IMR-90 (cell line): ENCODE measurements at regions of chr14 and their contacts with region 1.

Region 1: DNA sequence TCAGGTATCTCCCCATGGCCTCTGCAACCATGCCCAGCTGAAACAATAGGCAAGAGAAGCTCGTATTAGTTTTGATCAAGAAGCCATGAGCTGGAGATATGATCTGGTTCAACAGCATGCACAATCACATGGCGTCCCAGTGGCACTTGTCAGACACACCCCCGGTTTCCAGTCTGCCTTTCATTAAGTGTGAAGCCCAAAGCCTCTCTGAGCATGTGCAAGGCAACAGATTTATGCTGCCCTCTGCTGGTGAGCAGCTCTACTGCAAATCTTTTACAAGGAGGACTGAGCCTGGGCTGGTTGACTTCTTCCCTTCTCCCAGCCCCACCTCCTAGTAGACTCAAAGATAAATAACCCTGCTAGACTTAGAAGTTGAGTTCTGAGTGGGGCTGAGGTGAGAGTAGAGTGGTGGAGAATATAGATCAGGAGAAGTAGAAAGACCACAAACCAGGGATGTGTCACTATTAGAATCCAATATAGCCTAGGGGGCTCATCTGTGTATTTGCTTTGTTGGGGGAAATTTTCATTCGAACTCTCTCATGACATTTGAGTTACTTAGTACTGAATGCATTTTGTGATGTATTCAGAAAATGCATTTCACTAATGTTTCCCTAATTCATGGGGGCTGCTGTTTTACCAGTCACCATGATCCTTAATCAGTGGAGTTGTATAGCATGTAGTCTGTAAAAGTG is 53.7 kb upstream of the MBIP start:
- DNase-seq: peak; percentile 74
- ATAC-seq: peak; percentile 99
- H3K4me3 ChIP-seq: no peak overlapping the region
- H3K27ac ChIP-seq: no peak overlapping the region
- H3K4me1 ChIP-seq: no peaks in the 10 kb centered on the region
- H3K27me3 ChIP-seq: peaks cover 3% of the 10 kb centered on the region
- CTCF ChIP-seq: peak; percentile 91
- POLR2A ChIP-seq: no peak
- RAD21 ChIP-seq: peak; percentile 84

Region 2: GRCh38 chr14:35883677-35884293 is 490.3 kb before region 1 on chr14:
- CTCF ChIA-PET with region 1: interaction called, 4 read pairs
- POLR2A ChIA-PET with region 1: no interaction called
- dilution Hi-C with region 1: no loop called
- in situ Hi-C with region 1: no loop called
- intact Hi-C with region 1: loop called (anchors 2 kb)
- DNase-seq: peak; percentile 18
- ATAC-seq: peak; percentile 59
- H3K4me3 ChIP-seq: no peak overlapping the region
- H3K27ac ChIP-seq: no peak overlapping the region
- H3K4me1 ChIP-seq: peaks cover 2% of the 10 kb centered on the region
- H3K27me3 ChIP-seq: no peaks in the 10 kb centered on the region; the same call in 1 of the 2 replicates
- CTCF ChIP-seq: peak; percentile 65
- POLR2A ChIP-seq: no peak
- RAD21 ChIP-seq: peak; percentile 33

Region 3: GRCh38 chr14:36207500-36207899 is 166.6 kb before region 1 on chr14:
- CTCF ChIA-PET with region 1: interaction called, 7 read pairs
- POLR2A ChIA-PET with region 1: no interaction called
- dilution Hi-C with region 1: no loop called
- in situ Hi-C with region 1: loop called (anchors 10 kb)
- intact Hi-C with region 1: loop called (anchors 1 kb)
- DNase-seq: peak; percentile 10
- ATAC-seq: peak; percentile 65
- H3K4me3 ChIP-seq: no peak overlapping the region
- H3K27ac ChIP-seq: no peak overlapping the region
- H3K4me1 ChIP-seq: no peaks in the 10 kb centered on the region
- H3K27me3 ChIP-seq: peaks cover 7% of the 10 kb centered on the region; the same call in 1 of the 2 replicates
- CTCF ChIP-seq: peak; percentile 52
- POLR2A ChIP-seq: no peak
- RAD21 ChIP-seq: peak; percentile 49

Region 4: DNA sequence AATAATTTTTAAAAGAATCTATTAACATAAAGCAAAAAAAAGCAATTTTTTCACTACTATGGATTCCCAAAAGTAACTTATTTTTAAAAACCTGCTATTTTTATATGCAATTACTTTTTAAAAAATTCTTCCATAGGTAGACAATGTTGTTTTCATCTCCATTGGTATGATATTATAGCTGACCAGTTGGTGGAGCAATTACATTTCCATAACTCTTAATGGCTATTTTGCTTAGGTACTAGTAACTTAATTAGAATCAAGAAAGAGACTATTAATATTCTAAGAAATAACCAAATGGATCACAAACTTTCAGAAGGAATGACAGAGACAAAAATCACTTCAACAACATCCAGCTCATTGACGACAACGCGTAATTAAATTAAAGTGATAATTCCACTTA is 132.9 kb before region 1 on chr14:
- CTCF ChIA-PET with region 1: no interaction called
- POLR2A ChIA-PET with region 1: no interaction called
- dilution Hi-C with region 1: no loop called
- in situ Hi-C with region 1: no loop called
- intact Hi-C with region 1: loop called (anchors 1 kb)
- DNase-seq: no peak
- ATAC-seq: no peak
- H3K4me3 ChIP-seq: no peak overlapping the region
- H3K27ac ChIP-seq: no peak overlapping the region
- H3K4me1 ChIP-seq: peaks cover 6% of the 10 kb centered on the region; the same call in 1 of the 2 replicates
- H3K27me3 ChIP-seq: peaks cover 5% of the 10 kb centered on the region
- CTCF ChIP-seq: peak; percentile 16; the same call in 1 of the 2 replicates
- POLR2A ChIP-seq: no peak
- RAD21 ChIP-seq: no peak

Region 5: GRCh38 chr14:36320200-36320896 is 53.8 kb before region 1 on chr14 and contains the start of gene MBIP:
- CTCF ChIA-PET with region 1: no interaction called
- POLR2A ChIA-PET with region 1: no interaction called
- dilution Hi-C with region 1: no loop called
- in situ Hi-C with region 1: no loop called
- intact Hi-C with region 1: loop called (anchors 1 kb)
- DNase-seq: peak; percentile 97
- ATAC-seq: peak; percentile 99
- H3K4me3 ChIP-seq: peak within 1 kb of the TSS; percentile 77
- H3K27ac ChIP-seq: peak within 1 kb of the TSS; percentile 84
- H3K4me1 ChIP-seq: no peaks in the 10 kb centered on the region
- H3K27me3 ChIP-seq: no peaks in the 10 kb centered on the region
- CTCF ChIP-seq: no peak
- POLR2A ChIP-seq: peak; percentile 56; the same call in 1 of the 2 replicates
- RAD21 ChIP-seq: no peak
- total RNA-seq, gene MBIP: 9.3 and 15.0 TPM in 2 replicates